Panc1 (cell line): ENCODE measurements at regions of chr17 and their contacts with region 1.

Region 1: GRCh38 chr17:31175237-31175636 is 80.5 kb downstream of the NF1 start:
- DNase-seq: no peak
- ATAC-seq: no peak
- H3K4me3 ChIP-seq: no peak overlapping the region
- H3K27ac ChIP-seq: no peak overlapping the region
- H3K4me1 ChIP-seq: no peaks in the 10 kb centered on the region
- H3K27me3 ChIP-seq: no peaks in the 10 kb centered on the region
- CTCF ChIP-seq: no peak

Region 2: GRCh38 chr17:31094600-31095238 is 80.5 kb before region 1 on chr17 and contains the start of gene NF1:
- CTCF ChIA-PET with region 1: no interaction called
- POLR2A ChIA-PET with region 1: no interaction called
- in situ Hi-C with region 1: no loop called
- intact Hi-C with region 1: no loop called
- DNase-seq: peak; percentile 50
- ATAC-seq: peak; percentile 94
- H3K4me3 ChIP-seq: peak within 1 kb of the TSS; percentile 64 to 83
- H3K27ac ChIP-seq: peak within 1 kb of the TSS; percentile 88
- H3K4me1 ChIP-seq: peaks cover 19% of the 10 kb centered on the region
- H3K27me3 ChIP-seq: no peaks in the 10 kb centered on the region
- CTCF ChIP-seq: no peak
- total RNA-seq, gene NF1: 82.5 TPM

Region 3: DNA sequence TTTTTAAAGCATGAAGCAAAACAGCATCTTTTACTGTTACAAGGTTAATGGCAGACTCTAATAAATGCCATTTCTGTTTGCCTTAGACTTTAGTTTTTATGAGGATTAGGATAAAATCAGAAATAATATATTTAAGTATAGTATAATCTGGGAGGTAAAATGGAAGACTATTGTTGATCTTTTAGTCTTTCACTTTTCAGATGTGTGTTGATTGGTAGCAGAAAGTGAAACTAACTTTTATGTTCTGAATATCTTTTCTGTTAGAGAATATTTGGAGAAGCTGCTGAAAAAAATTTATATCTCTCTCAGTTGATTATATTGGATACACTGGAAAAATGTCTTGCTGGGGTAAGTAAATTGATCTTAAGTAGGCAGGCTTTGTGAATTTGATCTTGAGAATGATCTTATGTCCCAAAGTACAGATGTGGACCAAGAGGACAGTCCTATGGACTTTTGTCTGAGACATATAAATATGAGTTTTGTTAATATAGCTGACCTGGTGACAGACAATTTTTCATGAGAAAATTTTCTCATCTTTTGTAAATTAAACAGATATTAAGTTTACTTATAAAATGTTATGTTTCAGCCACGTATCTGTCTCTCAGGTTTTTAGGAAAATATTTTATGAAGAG is 16.4 kb before region 1 on chr17:
- CTCF ChIA-PET with region 1: no interaction called
- POLR2A ChIA-PET with region 1: interaction called, 10 read pairs
- in situ Hi-C with region 1: no loop called
- intact Hi-C with region 1: no loop called
- DNase-seq: no peak
- ATAC-seq: no peak
- H3K4me3 ChIP-seq: no peak overlapping the region
- H3K27ac ChIP-seq: no peak overlapping the region
- H3K4me1 ChIP-seq: peaks cover 6% of the 10 kb centered on the region; the same call in 1 of the 2 replicates
- H3K27me3 ChIP-seq: no peaks in the 10 kb centered on the region
- CTCF ChIP-seq: no peak